ENCODE measurements at regions of chr10 and their contacts with region 1.

Region 1: DNA sequence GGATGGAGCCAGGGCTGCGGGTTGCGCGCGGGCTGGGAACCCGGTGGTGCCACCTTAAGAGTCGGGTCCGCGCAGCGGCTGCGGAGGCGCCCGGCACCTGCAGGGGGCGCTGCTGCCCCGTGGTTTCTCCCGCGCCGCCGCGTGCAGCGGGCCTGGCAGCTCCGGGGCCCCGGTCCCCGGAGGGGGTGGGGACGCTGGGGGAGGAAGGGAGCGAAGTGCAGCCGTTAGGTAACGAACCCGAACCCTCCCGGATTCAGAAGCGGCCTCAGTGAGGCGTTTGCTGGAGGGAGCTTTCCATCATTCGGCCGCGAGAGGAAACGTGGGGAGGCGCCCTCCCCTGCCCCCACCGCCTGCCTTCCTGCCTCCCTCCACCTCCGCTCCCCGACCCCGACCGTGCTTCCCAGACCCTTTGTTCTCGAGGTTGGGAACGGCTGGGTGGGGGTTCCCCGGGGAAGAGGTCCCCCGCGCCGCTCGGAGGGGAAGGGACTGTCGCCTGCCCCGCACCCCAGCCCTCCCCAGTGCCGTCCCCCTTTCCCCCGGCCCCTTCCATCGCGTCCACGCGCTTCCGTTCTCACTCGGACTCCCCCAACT is 29.6 kb downstream of the SKIDA1 start:
- DNase-seq: peak; percentile 94
- ATAC-seq: peak; percentile 89

Region 2: DNA sequence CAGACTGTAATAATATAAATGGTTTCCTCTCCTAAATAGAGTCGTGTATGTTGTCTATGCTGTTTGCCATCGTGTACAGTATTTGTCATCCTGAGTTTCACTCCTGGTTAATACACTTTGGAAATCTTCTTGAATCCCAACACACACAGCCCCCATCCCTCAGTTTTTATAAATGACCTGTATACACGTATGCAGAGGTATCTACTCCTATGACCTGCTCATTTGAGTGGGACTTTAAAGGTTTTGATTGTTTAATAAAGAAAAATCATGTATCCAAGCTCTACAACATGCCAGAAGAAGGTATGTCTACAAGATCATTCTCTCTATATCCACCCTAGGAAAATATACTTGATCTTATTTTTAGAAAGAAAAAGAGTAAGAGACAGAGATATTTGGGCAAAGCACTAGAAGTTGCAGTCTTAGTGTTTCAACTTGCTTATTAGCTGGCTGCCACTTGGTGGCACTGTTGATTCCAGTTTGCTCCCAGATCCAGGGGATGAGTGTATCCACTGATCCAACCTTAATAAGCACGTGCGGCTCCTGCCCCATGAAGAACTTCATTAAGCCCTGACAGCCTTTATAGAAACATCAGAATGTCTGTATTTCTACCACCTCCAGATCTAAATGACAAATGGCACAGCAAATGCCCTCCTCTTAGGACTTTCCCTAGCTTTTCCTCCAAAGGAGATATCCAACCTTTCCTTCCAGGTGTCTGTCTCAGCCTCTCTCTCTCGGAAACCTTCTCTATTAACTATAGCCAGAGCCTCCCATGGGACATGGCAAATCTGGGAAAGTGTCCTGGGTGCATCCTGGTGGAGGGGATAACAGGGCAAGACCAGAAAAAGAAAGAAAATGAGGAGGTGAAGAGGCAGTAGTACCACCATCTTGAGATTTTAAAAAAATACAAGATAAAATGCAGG is 417.2 kb before region 1 on chr10:
- intact Hi-C with region 1: loop called (anchors 10 kb)
- DNase-seq: no peak
- ATAC-seq: peak; percentile 78

Region 3: GRCh38 chr10:21385996-21386610 is 109.7 kb before region 1 on chr10:
- intact Hi-C with region 1: no loop called
- DNase-seq: no peak
- ATAC-seq: no peak

Region 4: DNA sequence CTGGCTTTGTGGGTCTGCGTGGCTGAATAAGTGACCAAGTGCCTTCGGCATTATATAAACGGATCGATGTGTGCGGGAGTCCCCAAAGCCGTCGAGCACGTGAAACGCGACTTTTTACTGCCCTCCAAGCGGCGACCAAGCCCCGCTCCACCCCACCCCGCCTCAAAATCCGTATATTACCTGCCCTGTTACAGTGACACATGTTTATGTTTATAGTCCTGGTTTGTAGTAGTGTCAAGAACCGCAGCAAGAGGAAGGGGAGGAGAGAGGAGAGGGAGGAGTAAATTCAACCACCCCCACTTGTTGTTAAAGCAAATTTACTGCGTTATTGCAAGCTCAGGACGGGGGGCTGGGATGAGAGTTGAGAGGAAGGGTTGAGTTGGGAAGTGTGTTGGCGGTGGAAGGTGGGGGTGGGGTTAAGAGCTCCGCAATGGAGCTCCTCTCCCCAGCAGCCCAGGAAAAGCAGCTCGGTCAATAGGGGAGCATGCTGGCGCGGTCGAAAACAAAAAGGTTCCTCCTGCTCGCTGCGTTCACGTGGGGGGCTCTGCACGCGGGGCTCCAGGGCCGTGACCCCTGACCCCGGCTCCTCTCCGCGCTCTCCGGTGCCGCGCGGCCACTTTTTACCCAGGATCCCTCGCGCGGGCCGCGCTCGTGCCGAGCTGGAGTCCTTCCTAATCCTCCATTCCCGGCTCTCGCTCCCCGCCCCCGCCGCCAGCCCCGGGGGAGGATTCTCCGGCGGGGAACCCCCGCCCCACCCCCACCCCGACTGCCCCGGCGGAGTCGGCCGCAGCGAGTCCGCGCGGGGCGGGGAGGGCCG is 29.7 kb after region 1 on chr10 and contains the start of gene SKIDA1:
- intact Hi-C with region 1: loop called (anchors 2 kb)
- DNase-seq: peak; percentile 94
- ATAC-seq: peak; percentile 87
- total RNA-seq, gene SKIDA1: 2.6 TPM

Region 5: GRCh38 chr10:21732067-21732772 is 236.4 kb after region 1 on chr10:
- intact Hi-C with region 1: loop called (anchors 2 kb)
- DNase-seq: peak; percentile 78
- ATAC-seq: peak; percentile 89

Region 6: DNA sequence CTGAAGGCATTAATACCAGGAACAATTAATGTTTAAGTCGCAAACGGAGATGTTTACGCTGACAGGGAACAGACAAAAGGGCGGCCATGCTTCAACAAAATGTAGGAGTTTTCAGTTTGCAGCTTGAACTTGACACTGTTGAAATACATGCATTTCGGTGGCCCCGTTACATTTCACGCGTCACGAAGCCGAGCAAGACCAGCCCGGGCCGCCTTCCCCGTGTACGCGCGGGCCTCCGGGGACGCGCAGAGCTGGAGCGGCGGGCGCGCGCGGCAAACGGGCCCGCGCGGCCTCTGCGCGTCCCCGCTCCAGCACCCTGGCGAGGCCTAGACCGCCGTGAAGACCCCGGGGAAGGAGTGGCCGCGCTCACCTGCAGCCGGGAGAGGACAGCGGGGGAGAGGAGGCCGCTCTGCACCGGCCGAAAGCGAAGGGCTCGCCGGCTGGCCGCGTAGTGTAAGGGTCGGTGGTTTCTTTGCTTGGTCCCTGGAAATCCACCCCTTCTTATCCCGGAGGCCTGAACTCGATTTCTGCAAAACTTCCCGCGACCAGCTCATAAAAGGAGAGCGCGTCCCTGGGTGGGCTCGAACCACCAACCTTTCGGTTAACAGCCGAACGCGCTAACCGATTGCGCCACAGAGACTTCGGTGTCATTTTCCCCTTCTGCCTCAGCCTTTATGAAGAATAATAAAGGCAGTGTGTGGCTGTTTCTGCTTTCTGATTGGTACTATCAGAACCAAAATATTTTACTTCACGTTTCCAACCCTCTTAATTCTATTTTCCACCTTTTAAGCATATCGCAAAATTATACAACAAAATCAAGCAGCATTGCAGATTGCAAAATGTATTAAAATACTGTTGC is 733.3 kb after region 1 on chr10:
- intact Hi-C with region 1: loop called (anchors 10 kb)
- DNase-seq: peak; percentile 90
- ATAC-seq: peak; percentile 99